ENCODE measurements at regions of chr10 and their contacts with region 1.

Region 1: GRCh38 chr10:16314259-16314658 is 122.6 kb upstream of the PTER start:
- DNase-seq: no peak
- H3K4me3 ChIP-seq: no peak overlapping the region
- H3K27ac ChIP-seq: no peak overlapping the region
- H3K4me1 ChIP-seq: no peaks in the 10 kb centered on the region
- H3K27me3 ChIP-seq: no peaks in the 10 kb centered on the region
- CTCF ChIP-seq: no peak
- POLR2A ChIP-seq: no peak

Region 2: DNA sequence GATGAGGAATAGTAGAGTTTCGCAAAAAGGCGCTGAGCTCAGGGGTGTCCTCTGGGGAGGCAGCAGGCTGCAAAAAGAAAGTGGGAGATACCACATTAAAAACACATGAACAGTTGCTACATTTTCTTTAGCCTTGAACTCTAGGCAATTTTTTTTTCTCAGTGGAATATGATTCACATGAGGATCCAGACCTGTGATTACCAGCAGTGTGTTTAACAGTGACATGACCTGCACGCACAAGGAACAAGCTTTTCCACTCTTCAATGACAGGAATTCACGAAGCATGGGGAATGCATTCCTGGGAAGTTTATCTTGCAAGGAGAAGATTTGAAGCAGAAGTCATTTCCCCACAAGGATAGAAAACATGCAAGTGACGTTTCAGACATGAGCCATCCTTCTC is 756.1 kb before region 1 on chr10:
- intact Hi-C with region 1: no loop called
- DNase-seq: no peak
- H3K4me3 ChIP-seq: no peak overlapping the region
- H3K27ac ChIP-seq: no peak overlapping the region
- H3K4me1 ChIP-seq: no peaks in the 10 kb centered on the region
- H3K27me3 ChIP-seq: no peaks in the 10 kb centered on the region
- CTCF ChIP-seq: no peak
- POLR2A ChIP-seq: no peak

Region 3: GRCh38 chr10:16699435-16700057 is 385.3 kb after region 1 on chr10:
- intact Hi-C with region 1: loop called (anchors 10 kb)
- DNase-seq: no peak
- H3K4me3 ChIP-seq: no peak overlapping the region
- H3K27ac ChIP-seq: no peak overlapping the region
- H3K4me1 ChIP-seq: no peaks in the 10 kb centered on the region
- H3K27me3 ChIP-seq: no peaks in the 10 kb centered on the region
- CTCF ChIP-seq: no peak
- POLR2A ChIP-seq: no peak

Measured in breast epithelium (tissue), 4 donors.